Activated CD4-positive, alpha-beta memory T cell treated with anti-CD3 and anti-CD28 coated beads for 36 hours (primary cell): ENCODE measurements at regions of chr12 and their contacts with region 1.

Region 1: DNA sequence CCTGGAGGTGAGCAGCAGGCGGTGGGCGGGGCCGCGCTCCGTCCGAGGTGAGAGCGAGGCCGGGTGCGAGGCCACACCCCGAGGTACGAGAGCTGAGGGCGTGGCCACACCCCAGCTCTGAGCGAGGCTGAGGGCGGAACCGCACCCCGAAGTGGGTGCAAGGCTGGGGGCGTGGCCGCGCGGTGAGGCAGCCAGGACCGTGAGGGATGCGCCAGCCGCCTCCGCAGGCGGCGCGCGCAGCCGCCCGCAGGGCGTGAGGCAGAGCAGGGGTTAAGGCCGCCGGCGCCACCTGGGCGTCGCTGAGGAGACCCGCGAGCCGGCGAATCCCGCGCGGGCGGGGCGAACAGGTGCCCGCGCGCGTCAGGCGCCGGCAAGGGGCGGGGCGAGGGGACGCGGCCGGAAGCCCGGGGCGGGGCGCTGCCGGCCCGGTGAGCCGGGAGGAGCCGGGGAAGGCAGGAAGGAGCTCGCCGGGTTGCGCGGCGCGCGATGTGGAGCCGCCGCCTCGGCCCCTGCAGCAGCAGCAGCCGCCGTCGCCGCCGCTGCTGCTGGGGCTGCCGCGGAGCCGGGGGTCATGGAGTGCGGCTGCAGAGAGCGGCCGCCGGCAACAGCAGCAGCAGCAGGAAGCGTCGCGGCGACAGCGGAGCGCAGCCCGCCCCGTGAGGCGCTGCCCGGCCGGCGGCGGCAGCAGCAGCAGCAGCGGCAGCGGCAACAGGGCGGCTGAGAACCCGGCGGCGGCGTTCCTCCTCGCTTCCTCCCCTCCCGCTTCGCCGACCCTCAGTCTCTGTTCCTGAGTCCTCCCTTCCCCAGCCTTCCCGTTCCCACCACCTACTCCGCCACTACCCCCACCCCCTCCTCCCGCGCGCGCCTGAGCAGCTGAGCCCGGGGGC is at the start of gene BICDL1:
- DNase-seq: peak; percentile 99
- H3K4me3 Mint-ChIP-seq: peak within 1 kb of the TSS; percentile 88
- H3K27ac Mint-ChIP-seq: peak within 1 kb of the TSS; percentile 91
- H3K4me1 Mint-ChIP-seq: peaks cover 43% of the 10 kb centered on the region
- H3K27me3 Mint-ChIP-seq: no peaks in the 10 kb centered on the region
- total RNA-seq, gene BICDL1: 143 to 155 TPM

Region 2: DNA sequence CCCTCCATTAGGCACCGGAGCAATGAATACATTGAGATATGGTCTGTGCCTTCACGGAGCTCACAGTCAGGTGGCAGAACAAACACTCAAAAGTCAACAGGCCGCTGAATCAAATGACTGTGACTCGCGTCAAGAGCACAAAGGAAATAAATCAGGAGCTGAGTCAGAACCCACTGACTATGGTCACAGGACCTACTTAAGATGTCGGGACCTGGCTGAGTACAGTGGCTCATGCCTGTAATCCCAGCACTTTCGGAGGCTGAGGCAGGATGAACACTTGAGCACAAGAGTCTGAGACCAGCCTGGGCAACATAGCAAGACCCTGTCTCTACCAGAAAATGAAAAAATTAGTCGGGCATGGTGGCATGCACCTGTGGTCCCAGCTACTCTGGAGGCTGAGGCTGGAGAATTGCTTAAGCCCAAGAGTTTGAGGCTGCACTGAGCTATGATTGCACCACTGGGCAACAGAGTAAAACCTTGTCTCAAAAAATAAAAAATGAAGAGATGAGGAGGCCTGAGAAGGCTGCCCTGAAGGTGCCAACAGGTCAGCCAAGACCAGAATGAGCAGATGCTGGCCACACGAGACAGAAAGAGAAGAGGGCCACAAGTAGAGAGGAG is 375.6 kb before region 1 on chr12:
- CTCF ChIA-PET with region 1: no interaction called
- POLR2A ChIA-PET with region 1: no interaction called
- intact Hi-C with region 1: no loop called
- DNase-seq: no peak
- H3K4me3 Mint-ChIP-seq: no peak overlapping the region
- H3K27ac Mint-ChIP-seq: no peak overlapping the region
- H3K4me1 Mint-ChIP-seq: no peaks in the 10 kb centered on the region
- H3K27me3 Mint-ChIP-seq: peaks cover 13% of the 10 kb centered on the region

Region 3: DNA sequence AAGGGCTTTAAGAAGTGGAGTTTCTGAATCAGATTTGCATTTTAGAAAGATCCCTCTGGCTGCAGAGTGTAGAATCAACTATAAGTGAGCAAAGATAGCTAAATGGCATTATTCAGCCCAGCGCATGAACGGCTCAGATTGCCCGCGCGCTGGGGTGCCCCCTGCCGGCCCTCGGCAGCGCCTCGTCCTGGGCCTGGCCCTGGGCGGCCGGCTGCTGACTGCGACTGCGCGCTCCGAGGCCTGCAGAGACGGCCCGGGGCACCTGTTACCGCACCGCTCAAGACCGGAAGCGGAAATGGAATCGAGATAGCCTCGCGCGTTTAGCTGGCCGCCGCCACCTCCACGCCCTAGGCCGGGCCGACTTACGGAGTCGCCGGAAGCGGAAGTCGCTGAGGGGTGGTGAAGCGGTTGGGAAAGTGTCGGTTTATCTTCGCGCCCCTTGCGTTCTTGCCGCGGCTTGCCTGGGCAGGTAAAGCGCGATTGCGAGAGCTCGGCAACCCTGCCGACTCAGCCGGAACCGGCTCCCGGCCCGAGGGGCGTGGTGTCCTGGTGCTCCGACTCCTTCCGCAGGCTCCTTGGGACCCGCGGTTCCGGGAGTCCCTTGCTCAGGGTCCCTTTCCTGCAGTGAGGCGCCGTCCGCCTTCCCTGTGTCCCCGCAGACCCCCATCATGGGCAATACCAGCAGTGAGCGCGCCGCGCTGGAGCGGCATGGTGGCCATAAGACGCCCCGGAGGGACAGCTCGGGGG is 321.3 kb before region 1 on chr12 and contains the start of gene PRKAB1:
- CTCF ChIA-PET with region 1: interaction called, 3 read pairs
- POLR2A ChIA-PET with region 1: interaction called, 4 read pairs
- intact Hi-C with region 1: loop called (anchors 2 kb)
- DNase-seq: peak; percentile 98
- H3K4me3 Mint-ChIP-seq: peak within 1 kb of the TSS; percentile 82
- H3K27ac Mint-ChIP-seq: peak within 1 kb of the TSS; percentile 88
- H3K4me1 Mint-ChIP-seq: peaks cover 48% of the 10 kb centered on the region
- H3K27me3 Mint-ChIP-seq: no peaks in the 10 kb centered on the region
- total RNA-seq, gene PRKAB1: 27.3 to 29.3 TPM

Region 4: GRCh38 chr12:119804011-119804641 is 184.9 kb before region 1 on chr12:
- CTCF ChIA-PET with region 1: no interaction called
- POLR2A ChIA-PET with region 1: no interaction called
- intact Hi-C with region 1: no loop called
- DNase-seq: no peak
- H3K4me3 Mint-ChIP-seq: no peak overlapping the region
- H3K27ac Mint-ChIP-seq: no peak overlapping the region
- H3K4me1 Mint-ChIP-seq: peaks cover 5% of the 10 kb centered on the region
- H3K27me3 Mint-ChIP-seq: no peaks in the 10 kb centered on the region

Region 5: GRCh38 chr12:119876761-119877638 is 112.0 kb before region 1 on chr12 and contains the start of gene CIT:
- CTCF ChIA-PET with region 1: no interaction called
- POLR2A ChIA-PET with region 1: no interaction called
- intact Hi-C with region 1: loop called (anchors 10 kb)
- DNase-seq: peak; percentile 92
- H3K4me3 Mint-ChIP-seq: peak within 1 kb of the TSS; percentile 93
- H3K27ac Mint-ChIP-seq: peak within 1 kb of the TSS; percentile 30
- H3K4me1 Mint-ChIP-seq: peaks cover 15% of the 10 kb centered on the region
- H3K27me3 Mint-ChIP-seq: no peaks in the 10 kb centered on the region
- total RNA-seq, gene CIT: 57.5 to 61.7 TPM

Region 6: DNA sequence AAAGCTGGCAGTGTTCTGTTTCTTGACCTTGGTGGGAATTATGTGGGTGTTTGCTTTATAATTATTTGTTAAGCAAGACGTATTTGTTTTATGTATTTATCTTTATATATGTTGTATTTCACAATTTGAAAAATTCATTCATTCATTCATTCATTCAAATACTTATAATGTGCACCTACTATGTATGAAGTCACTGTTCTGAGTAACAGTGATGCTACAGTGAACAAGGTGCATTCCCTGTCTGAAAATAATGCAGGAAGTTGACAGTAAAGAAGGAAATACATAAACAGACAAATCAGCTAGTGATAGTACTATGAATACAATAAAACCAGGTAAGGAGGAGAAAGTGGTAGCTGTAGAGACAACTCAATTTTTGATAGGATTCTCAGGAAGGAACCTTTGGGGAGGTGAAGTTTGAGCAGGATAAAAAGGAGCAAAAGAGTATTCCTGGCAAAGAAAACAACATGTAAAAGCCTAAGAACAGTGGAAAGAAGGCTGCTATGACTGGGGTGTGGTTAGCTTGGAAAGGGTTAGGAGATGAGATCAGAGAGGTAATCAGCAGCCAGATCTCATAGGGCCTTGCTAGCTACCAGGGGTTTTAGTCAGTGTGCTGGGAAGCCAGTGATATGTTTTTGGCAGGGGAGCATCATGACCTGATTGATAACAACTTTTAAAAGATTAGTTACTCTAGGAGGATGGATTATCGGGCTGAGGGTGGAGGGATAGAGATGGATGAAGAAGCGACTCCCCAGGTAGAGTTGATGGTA is 17.4 kb after region 1 on chr12:
- CTCF ChIA-PET with region 1: interaction called, 24 read pairs
- POLR2A ChIA-PET with region 1: interaction called, 209 read pairs
- intact Hi-C with region 1: loop called (anchors 1 kb)
- DNase-seq: peak; percentile 71
- H3K4me3 Mint-ChIP-seq: peak overlapping the region; percentile 53
- H3K27ac Mint-ChIP-seq: peak overlapping the region; percentile 96
- H3K4me1 Mint-ChIP-seq: peaks cover 70% of the 10 kb centered on the region
- H3K27me3 Mint-ChIP-seq: no peaks in the 10 kb centered on the region

Region 7: GRCh38 chr12:120086801-120087621 is 98.0 kb after region 1 on chr12:
- CTCF ChIA-PET with region 1: interaction called, 25 read pairs
- POLR2A ChIA-PET with region 1: interaction called, 11 read pairs
- intact Hi-C with region 1: loop called (anchors 1 kb)
- DNase-seq: peak; percentile 100
- H3K4me3 Mint-ChIP-seq: peak overlapping the region; percentile 64
- H3K27ac Mint-ChIP-seq: peak overlapping the region; percentile 87
- H3K4me1 Mint-ChIP-seq: peaks cover 38% of the 10 kb centered on the region
- H3K27me3 Mint-ChIP-seq: no peaks in the 10 kb centered on the region

Region 8: DNA sequence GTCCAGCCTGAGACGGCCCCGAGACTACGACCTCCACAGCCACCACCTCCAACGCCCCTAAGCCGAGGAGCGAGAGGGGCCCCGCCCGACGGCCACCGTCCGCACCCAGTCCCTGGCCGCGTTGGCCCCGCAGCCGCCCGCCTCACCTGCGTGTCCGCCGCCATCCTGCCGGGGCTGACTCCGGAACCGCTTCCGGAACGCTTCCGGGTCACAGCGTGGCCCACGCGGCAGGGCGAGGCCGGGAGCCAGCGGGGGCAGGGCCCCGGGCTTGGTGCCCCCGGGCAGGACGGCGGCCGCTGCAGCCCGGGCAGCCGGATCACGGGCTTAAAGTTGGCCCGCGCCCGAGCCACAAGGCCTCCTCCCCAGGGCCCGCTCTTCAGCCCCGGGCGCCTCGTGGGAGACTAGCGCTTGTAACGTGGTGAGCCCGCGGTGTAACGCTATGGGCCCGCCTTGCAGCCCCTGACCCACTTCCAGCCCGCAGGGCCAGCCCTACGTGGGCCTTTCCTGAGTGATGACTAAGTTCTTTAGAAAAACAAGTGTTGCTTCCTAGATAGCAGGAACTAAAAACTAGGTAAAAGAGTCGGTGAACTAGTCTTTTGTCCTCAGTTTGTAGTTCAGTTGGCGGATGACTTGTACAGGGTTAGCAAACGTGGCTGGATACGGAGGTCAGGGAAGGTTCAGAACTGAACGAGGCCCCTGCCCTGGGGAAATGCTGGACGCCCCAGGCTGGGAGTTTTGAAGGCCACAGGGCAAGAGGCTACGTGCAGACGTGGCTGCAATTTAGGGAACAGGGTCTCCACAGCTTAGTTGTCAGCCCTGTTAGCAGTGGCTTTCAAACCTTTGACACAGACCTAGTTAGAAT is 205.7 kb after region 1 on chr12 and contains the start of gene GCN1:
- CTCF ChIA-PET with region 1: no interaction called
- POLR2A ChIA-PET with region 1: no interaction called
- intact Hi-C with region 1: loop called (anchors 5 kb)
- DNase-seq: peak; percentile 91
- H3K4me3 Mint-ChIP-seq: peak within 1 kb of the TSS; percentile 91
- H3K27ac Mint-ChIP-seq: peak within 1 kb of the TSS; percentile 98
- H3K4me1 Mint-ChIP-seq: peaks cover 51% of the 10 kb centered on the region
- H3K27me3 Mint-ChIP-seq: no peaks in the 10 kb centered on the region
- total RNA-seq, gene GCN1: 121 TPM